PC-9 (cell line): ENCODE measurements at regions of chr2 and their contacts with region 1.

Region 1: DNA sequence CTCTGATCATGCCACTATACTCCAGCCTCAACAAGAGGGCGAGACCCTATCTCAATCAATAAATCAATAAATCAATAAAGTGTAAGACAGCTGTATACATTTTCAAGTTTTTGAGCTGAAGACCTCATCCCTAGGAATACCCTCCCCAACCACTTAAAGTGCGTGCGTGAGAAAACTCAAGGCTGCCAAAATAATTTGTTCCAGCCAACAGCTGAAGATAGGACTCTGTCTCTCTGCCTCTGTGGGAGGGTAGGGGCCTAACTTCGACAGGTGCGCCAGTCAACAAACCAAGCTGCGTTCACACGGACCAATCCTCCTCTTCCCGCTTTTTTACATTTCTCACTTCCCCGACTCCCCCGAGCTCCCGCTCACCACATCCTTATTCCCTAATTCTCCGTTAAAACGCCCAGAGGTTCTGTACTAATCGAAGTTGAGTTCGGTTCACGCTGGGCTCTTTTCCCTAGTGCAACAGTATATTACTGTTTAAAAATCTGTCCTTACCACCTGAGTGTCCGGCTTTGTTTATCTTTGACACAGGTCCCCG is 618 bp downstream of the POLR2D start:
- DNase-seq: peak in 1 of 2 experiments; percentile 11
- H3K4me3 ChIP-seq: peak overlapping the region; percentile 99
- H3K27ac ChIP-seq: peak overlapping the region; percentile 18; the same call in 1 of the 2 replicates
- H3K4me1 ChIP-seq: peaks cover 15% of the 10 kb centered on the region
- H3K27me3 ChIP-seq: no peaks in the 10 kb centered on the region
- CTCF ChIP-seq: no peak

Region 2: GRCh38 chr2:127701193-127701650 is 156.1 kb before region 1 on chr2 and contains the start of gene SFT2D3:
- CTCF ChIA-PET with region 1: no interaction called
- POLR2A ChIA-PET with region 1: no interaction called
- intact Hi-C with region 1: loop called (anchors 5 kb)
- DNase-seq: peak; percentile 89 to 93
- H3K4me3 ChIP-seq: peak within 1 kb of the TSS; percentile 66
- H3K27ac ChIP-seq: peak within 1 kb of the TSS; percentile 94
- H3K4me1 ChIP-seq: peaks cover 32% of the 10 kb centered on the region
- H3K27me3 ChIP-seq: no peaks in the 10 kb centered on the region
- CTCF ChIP-seq: no peak
- total RNA-seq, gene SFT2D3: 7.3 and 8.4 TPM in 2 replicates

Region 3: GRCh38 chr2:127770973-127771735 is 86.2 kb before region 1 on chr2:
- CTCF ChIA-PET with region 1: no interaction called
- POLR2A ChIA-PET with region 1: no interaction called
- intact Hi-C with region 1: loop called (anchors 5 kb)
- DNase-seq: peak in 1 of 2 experiments; percentile 78
- H3K4me3 ChIP-seq: no peak overlapping the region
- H3K27ac ChIP-seq: peak overlapping the region; percentile 49
- H3K4me1 ChIP-seq: peaks cover 21% of the 10 kb centered on the region; the same call in 1 of the 2 replicates
- H3K27me3 ChIP-seq: no peaks in the 10 kb centered on the region
- CTCF ChIP-seq: no peak

Region 4: GRCh38 chr2:127901339-127902056 is 44.2 kb after region 1 on chr2:
- CTCF ChIA-PET with region 1: interaction called, 17 read pairs
- POLR2A ChIA-PET with region 1: no interaction called
- intact Hi-C with region 1: no loop called
- DNase-seq: no peak
- H3K4me3 ChIP-seq: no peak overlapping the region
- H3K27ac ChIP-seq: no peak overlapping the region
- H3K4me1 ChIP-seq: no peaks in the 10 kb centered on the region
- H3K27me3 ChIP-seq: peaks cover 19% of the 10 kb centered on the region; the same call in 1 of the 2 replicates
- CTCF ChIP-seq: no peak

Region 5: DNA sequence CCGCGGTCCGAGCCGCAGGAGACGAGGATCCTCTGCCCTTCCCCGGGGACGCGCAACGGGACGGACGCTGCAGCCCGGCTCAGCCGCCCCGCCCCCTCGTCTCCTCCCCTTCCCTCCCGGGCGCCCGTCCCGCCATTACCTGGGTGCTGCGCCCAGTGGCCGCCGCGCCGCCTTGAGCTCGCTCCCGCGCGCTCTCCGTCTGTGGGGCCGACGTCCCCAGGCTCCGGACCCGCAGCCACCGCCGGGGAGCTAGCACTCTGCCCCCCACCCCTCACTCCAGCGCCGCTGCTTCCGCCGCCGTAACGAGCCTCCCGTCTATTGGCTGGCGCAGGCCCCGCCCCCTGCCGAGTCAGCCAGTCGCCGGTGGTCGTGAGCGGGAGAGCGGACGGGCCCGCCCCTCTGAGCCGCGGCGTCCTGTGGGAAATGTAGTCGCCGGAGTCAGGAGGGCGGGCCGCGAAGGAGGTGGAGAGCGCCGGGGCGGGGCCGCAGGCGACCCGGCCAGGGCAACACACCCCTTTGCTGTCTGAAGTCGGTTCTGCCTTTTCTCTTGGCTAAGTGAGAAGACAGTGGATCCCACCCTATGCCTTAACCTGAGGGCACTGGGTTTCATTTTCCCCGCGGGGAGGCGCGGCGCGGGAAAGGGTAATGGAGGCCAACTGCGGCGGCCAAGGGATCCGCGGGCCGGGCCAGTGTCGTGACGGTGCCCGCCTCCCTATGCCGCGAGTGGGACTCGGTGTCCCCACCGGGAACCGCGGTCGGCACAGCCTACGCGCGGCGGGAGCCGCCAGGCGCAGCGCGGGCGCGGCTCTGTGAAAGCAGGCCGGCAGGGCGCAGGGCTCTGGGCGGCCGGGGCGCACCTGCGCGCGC is 170.7 kb after region 1 on chr2 and contains the start of gene SAP130:
- CTCF ChIA-PET with region 1: no interaction called
- POLR2A ChIA-PET with region 1: no interaction called
- intact Hi-C with region 1: loop called (anchors 2 kb)
- DNase-seq: peak; percentile 91 to 99
- H3K4me3 ChIP-seq: peak within 1 kb of the TSS; percentile 98
- H3K27ac ChIP-seq: peak within 1 kb of the TSS; percentile 28; the same call in 1 of the 2 replicates
- H3K4me1 ChIP-seq: peaks cover 17% of the 10 kb centered on the region
- H3K27me3 ChIP-seq: no peaks in the 10 kb centered on the region
- CTCF ChIP-seq: no peak
- total RNA-seq, gene SAP130: 27.2 and 33.9 TPM in 2 replicates

Region 6: GRCh38 chr2:128090945-128091725 is 233.8 kb after region 1 on chr2 and contains the start of gene UGGT1:
- CTCF ChIA-PET with region 1: no interaction called
- POLR2A ChIA-PET with region 1: no interaction called
- intact Hi-C with region 1: loop called (anchors 1 kb)
- DNase-seq: peak; percentile 94 to 95
- H3K4me3 ChIP-seq: peak within 1 kb of the TSS; percentile 85
- H3K27ac ChIP-seq: peak within 1 kb of the TSS; percentile 73
- H3K4me1 ChIP-seq: peaks cover 18% of the 10 kb centered on the region; the same call in 1 of the 2 replicates
- H3K27me3 ChIP-seq: no peaks in the 10 kb centered on the region
- CTCF ChIP-seq: 0 out of 2 replicates have a peak, but pooled peaks have one; percentile 5
- total RNA-seq, gene UGGT1: 47.7 and 56.9 TPM in 2 replicates